Panc1 (cell line): ENCODE measurements at regions of chr16 and their contacts with region 1.

Region 1: GRCh38 chr16:84065536-84066132 is 23.0 kb upstream of the SLC38A8 start:
- DNase-seq: no peak
- ATAC-seq: peak; percentile 83
- H3K4me3 ChIP-seq: no peak overlapping the region
- H3K27ac ChIP-seq: no peak overlapping the region
- H3K4me1 ChIP-seq: no peaks in the 10 kb centered on the region
- H3K27me3 ChIP-seq: no peaks in the 10 kb centered on the region
- CTCF ChIP-seq: peak; percentile 79

Region 2: GRCh38 chr16:83956336-83957289 is 109.0 kb before region 1 on chr16:
- CTCF ChIA-PET with region 1: interaction called, 6 read pairs
- POLR2A ChIA-PET with region 1: no interaction called
- in situ Hi-C with region 1: no loop called
- intact Hi-C with region 1: loop called (anchors 1 kb)
- DNase-seq: peak; percentile 45
- ATAC-seq: peak; percentile 68
- H3K4me3 ChIP-seq: no peak overlapping the region
- H3K27ac ChIP-seq: no peak overlapping the region
- H3K4me1 ChIP-seq: peaks cover 9% of the 10 kb centered on the region
- H3K27me3 ChIP-seq: no peaks in the 10 kb centered on the region
- CTCF ChIP-seq: peak; percentile 90

Region 3: DNA sequence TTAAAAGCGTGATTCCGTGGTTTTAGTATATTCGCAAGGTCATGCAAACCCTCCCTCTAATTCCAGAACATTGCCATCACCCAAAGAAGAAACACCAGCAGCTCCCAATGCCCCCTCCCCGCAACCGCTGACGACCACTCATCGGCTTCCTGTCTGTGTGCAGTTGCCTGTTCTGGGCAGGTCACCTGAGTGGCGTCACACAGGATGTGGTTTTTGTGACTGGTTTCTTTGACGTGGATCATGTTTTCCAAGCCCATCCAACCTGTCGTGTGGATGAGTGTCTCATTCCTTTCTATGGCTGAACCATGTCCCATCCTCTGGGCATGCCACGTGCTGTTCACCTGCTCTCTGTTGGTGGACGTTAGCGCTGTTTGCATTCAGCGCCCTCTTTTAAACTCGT is 294.5 kb after region 1 on chr16:
- CTCF ChIA-PET with region 1: no interaction called
- POLR2A ChIA-PET with region 1: interaction called, 16 read pairs
- in situ Hi-C with region 1: no loop called
- intact Hi-C with region 1: no loop called
- DNase-seq: no peak
- ATAC-seq: no peak
- H3K4me3 ChIP-seq: no peak overlapping the region
- H3K27ac ChIP-seq: no peak overlapping the region
- H3K4me1 ChIP-seq: no peaks in the 10 kb centered on the region
- H3K27me3 ChIP-seq: no peaks in the 10 kb centered on the region
- CTCF ChIP-seq: no peak